ENCODE measurements at regions of chr12 and their contacts with region 1.

Region 1: GRCh38 chr12:29103539-29103974 is 45.5 kb upstream of the FAR2 start:
- DNase-seq: peak in 8 of 9 donors; percentile 41 to 82 (median 76)
- ATAC-seq: peak; percentile 95
- H3K4me3 ChIP-seq: peak overlapping the region; percentile 21
- H3K4me3 Mint-ChIP-seq: peak overlapping the region; percentile 71 to 91 (median 78)
- H3K27ac ChIP-seq: peak overlapping the region; percentile 74
- H3K27ac Mint-ChIP-seq: peak overlapping the region; percentile 91 to 99 (median 97)
- H3K4me1 ChIP-seq: peaks cover 23 to 33% of the 10 kb centered on the region in 2 donors
- H3K4me1 Mint-ChIP-seq: peaks cover 30 to 54% (median 46%) of the 10 kb centered on the region in 7 donors
- H3K27me3 ChIP-seq: no peaks in the 10 kb centered on the region
- H3K27me3 Mint-ChIP-seq: peaks cover 0 to 23% (median 0%) of the 10 kb centered on the region in 5 donors

Region 2: DNA sequence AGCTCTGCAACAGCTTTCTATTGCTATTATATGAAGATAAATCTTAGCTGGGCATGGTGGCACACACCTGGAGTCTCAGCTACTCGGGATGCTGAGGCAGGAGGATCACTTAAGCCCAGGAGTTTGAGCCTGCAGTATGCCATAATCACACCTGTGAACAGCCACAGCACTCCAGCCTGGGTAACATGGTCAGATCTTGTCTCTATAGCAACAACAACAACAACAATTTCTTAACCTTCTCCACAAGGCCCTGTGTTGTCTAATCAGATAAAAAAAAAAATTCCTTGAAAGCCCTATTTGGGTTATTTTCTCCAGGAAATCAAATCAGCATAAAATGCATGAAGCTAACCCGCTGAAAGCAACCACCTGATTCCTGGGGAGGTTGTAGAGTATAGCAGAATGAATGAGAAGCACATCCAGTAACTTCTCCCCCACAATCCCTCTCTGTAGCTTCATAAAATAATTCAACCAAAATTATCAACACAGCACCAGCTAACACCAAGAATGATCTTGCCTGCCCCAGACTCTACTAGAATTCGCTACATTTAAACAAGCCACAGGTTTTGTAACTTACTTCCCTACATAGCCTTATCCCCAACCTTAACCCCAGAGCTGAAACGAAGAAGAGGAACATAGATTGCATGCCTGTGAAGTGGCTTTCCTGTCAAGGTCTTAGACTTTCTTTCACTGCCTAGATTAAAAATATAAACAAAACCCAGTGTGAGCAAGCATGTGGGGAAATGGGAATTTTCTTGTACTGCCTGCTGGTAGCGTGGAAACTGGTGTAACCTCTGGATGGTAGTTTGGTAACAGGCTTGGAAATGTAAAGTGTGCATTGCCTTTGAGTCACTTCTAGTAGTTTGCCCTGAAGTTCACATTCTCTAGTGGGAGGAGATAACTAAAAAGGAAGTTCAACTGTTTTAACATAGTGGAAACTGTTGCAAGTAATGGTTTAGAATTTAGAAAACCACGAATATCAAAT is 1865.5 kb before region 1 on chr12:
- CTCF ChIA-PET with region 1: no interaction called
- POLR2A ChIA-PET with region 1: no interaction called
- intact Hi-C with region 1: loop called in 1 of 2 experiments (anchors 10 kb)
- DNase-seq: peak in 7 of 9 donors; percentile 6 to 31 (median 25)
- ATAC-seq: peak; percentile 86
- H3K4me3 ChIP-seq: no peak overlapping the region
- H3K4me3 Mint-ChIP-seq: peak overlapping the region in 9 of 10 donors; percentile 39 to 73 (median 48)
- H3K27ac ChIP-seq: peak overlapping the region; percentile 42
- H3K27ac Mint-ChIP-seq: peak overlapping the region; percentile 60 to 93 (median 87)
- H3K4me1 ChIP-seq: peaks cover 0 to 14% of the 10 kb centered on the region in 2 donors
- H3K4me1 Mint-ChIP-seq: peaks cover 12 to 34% (median 32%) of the 10 kb centered on the region in 7 donors
- H3K27me3 ChIP-seq: no peaks in the 10 kb centered on the region
- H3K27me3 Mint-ChIP-seq: peaks cover 0 to 5% (median 0%) of the 10 kb centered on the region in 5 donors

Region 3: GRCh38 chr12:27710592-27711316 is 1392.8 kb before region 1 on chr12 and contains the start of gene MRPS35:
- CTCF ChIA-PET with region 1: no interaction called
- POLR2A ChIA-PET with region 1: no interaction called
- intact Hi-C with region 1: loop called in 1 of 2 experiments (anchors 5 kb)
- DNase-seq: peak; percentile 86 to 94 (median 92)
- ATAC-seq: peak; percentile 100
- H3K4me3 ChIP-seq: peak within 1 kb of the TSS; percentile 98
- H3K4me3 Mint-ChIP-seq: peak within 1 kb of the TSS; percentile 94 to 100 (median 98)
- H3K27ac ChIP-seq: peak within 1 kb of the TSS; percentile 85
- H3K27ac Mint-ChIP-seq: peak within 1 kb of the TSS; percentile 91 to 100 (median 98)
- H3K4me1 ChIP-seq: peaks cover 7 to 13% of the 10 kb centered on the region in 2 donors
- H3K4me1 Mint-ChIP-seq: peaks cover 21 to 46% (median 39%) of the 10 kb centered on the region in 7 donors
- H3K27me3 ChIP-seq: no peaks in the 10 kb centered on the region
- H3K27me3 Mint-ChIP-seq: peaks cover 0 to 18% (median 0%) of the 10 kb centered on the region in 5 donors
- total RNA-seq, gene MRPS35: 19.9 to 35.7 (median 23.5) TPM

Region 4: DNA sequence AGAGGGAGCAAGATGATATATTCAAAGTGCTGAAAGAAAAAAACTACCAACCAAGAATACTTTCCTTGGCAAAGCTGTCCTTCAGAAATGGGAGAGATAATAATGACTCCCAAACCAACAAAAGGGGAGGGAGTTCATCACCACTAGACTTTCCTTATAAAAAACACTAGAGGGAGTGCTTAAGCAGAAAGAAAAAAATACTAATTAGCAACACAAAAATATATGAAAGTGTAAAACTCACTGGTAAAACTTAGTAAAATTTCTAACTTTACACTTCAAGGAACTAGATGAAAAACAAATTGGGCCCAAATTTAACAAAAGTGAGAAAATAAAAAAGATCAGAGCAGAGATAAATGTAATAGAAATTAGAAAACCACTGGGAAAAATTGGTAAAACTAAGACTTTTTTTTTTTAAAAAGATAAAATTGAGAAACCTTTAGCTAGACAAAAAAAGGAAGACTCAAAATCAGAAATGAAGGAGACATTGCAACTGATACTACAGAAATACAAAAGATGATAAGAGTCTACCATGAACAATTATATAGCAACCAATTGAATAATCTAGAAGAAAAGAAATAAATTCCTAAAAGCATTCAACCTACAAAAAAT is 14.8 kb before region 1 on chr12:
- CTCF ChIA-PET with region 1: interaction called, 3 read pairs
- POLR2A ChIA-PET with region 1: interaction called, 6 read pairs
- intact Hi-C with region 1: loop called (anchors 1 kb)
- DNase-seq: peak in 4 of 9 donors; percentile 26 to 36 (median 29)
- ATAC-seq: peak; percentile 49
- H3K4me3 ChIP-seq: no peak overlapping the region
- H3K4me3 Mint-ChIP-seq: no peak overlapping the region
- H3K27ac ChIP-seq: no peak overlapping the region
- H3K27ac Mint-ChIP-seq: no peak overlapping the region
- H3K4me1 ChIP-seq: no peaks in the 10 kb centered on the region
- H3K4me1 Mint-ChIP-seq: peaks cover 0 to 5% (median 3%) of the 10 kb centered on the region in 7 donors
- H3K27me3 ChIP-seq: no peaks in the 10 kb centered on the region
- H3K27me3 Mint-ChIP-seq: peaks cover 0 to 45% (median 0%) of the 10 kb centered on the region in 5 donors

Region 5: DNA sequence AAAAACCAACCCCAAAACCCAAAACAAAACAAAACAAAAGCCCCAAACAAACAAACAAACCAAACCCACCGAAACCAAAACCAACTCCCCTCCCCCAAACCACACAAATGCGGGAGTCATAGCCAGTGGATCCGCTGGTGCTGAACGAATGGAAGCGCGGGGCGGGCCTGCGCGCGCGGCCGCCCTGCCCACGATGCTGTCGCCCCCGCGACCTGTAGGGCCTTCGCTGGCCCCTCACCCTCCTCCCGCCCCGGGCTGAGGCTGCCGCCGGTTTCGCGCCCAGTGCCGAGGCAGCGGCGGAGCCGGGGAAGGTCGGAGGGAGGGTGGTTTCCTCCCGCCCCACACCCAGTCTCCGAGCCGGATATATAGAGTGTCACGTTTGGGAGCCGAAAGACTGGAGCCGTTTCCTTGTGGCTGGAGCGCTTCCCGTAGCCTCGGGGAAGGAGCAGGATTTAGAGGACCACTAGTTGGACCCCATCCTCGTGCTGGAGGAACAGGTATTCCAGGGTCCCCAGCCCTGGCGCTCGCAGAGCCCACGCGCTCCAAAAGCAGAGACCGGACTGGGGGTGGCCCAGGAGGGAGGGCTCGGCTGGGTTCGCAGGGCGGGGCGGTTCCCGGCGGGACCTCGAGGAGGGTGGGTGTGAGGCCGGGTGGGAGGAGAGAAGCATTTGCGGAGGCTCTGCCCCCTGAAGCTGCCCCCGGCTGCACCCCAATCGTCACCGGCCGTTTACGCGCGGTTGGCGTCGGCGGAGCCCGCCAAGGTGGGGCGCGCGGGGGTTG is 45.5 kb after region 1 on chr12 and contains the start of gene FAR2:
- CTCF ChIA-PET with region 1: no interaction called
- POLR2A ChIA-PET with region 1: interaction called, 4 read pairs
- intact Hi-C with region 1: loop called (anchors 1 kb)
- DNase-seq: peak; percentile 20 to 58 (median 33)
- ATAC-seq: peak; percentile 78
- H3K4me3 ChIP-seq: peak within 1 kb of the TSS; percentile 88
- H3K4me3 Mint-ChIP-seq: peak within 1 kb of the TSS; percentile 87 to 96 (median 92)
- H3K27ac ChIP-seq: peak within 1 kb of the TSS; percentile 37
- H3K27ac Mint-ChIP-seq: peak within 1 kb of the TSS; percentile 36 to 94 (median 74)
- H3K4me1 ChIP-seq: peaks cover 0 to 6% of the 10 kb centered on the region in 2 donors
- H3K4me1 Mint-ChIP-seq: peaks cover 14 to 31% (median 27%) of the 10 kb centered on the region in 7 donors
- H3K27me3 ChIP-seq: no peaks in the 10 kb centered on the region
- H3K27me3 Mint-ChIP-seq: peaks cover 0 to 64% (median 10%) of the 10 kb centered on the region in 5 donors
- total RNA-seq, gene FAR2: 1.1 to 11.1 (median 3.0) TPM

Region 6: DNA sequence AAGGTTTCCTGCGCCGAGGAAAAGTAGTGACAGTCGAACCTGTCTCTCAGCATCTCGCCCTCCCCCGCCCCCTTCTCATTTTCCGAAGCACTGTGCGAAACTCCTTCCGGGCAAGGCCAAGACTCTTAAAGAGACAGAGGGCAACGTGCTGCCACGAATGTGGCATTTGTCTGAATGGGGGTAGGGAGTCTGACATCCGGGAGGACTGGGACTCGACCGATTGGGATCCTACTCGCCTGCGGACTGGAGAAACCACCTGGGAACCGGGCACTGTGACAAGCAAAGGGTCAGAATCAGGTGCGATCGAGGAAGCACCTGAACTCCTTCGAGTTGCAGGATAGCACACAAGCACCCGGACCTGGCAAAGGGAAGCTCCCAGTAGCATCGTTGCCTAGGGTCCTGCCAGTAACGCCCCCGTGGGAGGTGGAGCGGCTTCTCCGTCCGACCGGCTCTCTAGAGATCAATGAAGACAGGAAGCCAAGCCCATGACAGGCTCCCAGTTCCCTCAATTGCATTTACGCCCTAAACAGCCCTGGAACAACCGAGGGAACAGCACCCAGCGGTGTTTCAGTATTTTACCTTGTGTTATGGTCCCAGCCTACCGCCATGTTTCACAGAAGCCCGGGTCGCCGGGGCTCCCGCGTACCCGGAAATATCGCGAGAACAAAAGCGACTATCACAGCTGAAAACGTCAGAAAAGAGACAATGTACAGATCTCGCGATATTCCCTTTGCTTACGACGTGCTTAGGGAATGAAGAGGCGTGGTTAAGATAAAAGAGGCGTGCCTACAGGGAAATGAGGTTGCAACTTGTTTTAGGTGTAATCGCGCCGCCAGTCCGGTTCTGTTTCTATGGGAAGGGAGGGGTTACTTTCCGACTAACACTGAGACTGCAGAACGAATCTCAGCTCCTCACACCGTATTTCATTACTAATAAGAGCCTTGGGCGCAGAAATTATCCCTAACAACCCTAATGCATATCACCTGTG is 277.3 kb after region 1 on chr12 and contains the start of gene ERGIC2:
- CTCF ChIA-PET with region 1: interaction called, 3 read pairs
- POLR2A ChIA-PET with region 1: interaction called, 11 read pairs
- intact Hi-C with region 1: loop called (anchors 1 kb)
- DNase-seq: peak; percentile 63 to 97 (median 95)
- ATAC-seq: peak; percentile 97
- H3K4me3 ChIP-seq: peak within 1 kb of the TSS; percentile 98
- H3K4me3 Mint-ChIP-seq: peak within 1 kb of the TSS; percentile 88 to 97 (median 94)
- H3K27ac ChIP-seq: peak within 1 kb of the TSS; percentile 91
- H3K27ac Mint-ChIP-seq: peak within 1 kb of the TSS; percentile 92 to 98 (median 96)
- H3K4me1 ChIP-seq: peaks cover 9 to 12% of the 10 kb centered on the region in 2 donors
- H3K4me1 Mint-ChIP-seq: peaks cover 20 to 63% (median 46%) of the 10 kb centered on the region in 7 donors
- H3K27me3 ChIP-seq: no peaks in the 10 kb centered on the region
- H3K27me3 Mint-ChIP-seq: no peaks in the 10 kb centered on the region
- total RNA-seq, gene ERGIC2: 36.0 to 85.7 (median 78.6) TPM

Region 7: GRCh38 chr12:30695199-30696103 is 1591.9 kb after region 1 on chr12 and contains the start of gene IPO8:
- CTCF ChIA-PET with region 1: no interaction called
- POLR2A ChIA-PET with region 1: no interaction called
- intact Hi-C with region 1: loop called in 1 of 2 experiments (anchors 5 kb)
- DNase-seq: peak; percentile 61 to 83 (median 76)
- ATAC-seq: peak; percentile 97
- H3K4me3 ChIP-seq: peak within 1 kb of the TSS; percentile 94
- H3K4me3 Mint-ChIP-seq: peak within 1 kb of the TSS; percentile 93 to 100 (median 96)
- H3K27ac ChIP-seq: peak within 1 kb of the TSS; percentile 78
- H3K27ac Mint-ChIP-seq: peak within 1 kb of the TSS; percentile 91 to 98 (median 94)
- H3K4me1 ChIP-seq: peaks cover 22 to 28% of the 10 kb centered on the region in 2 donors
- H3K4me1 Mint-ChIP-seq: peaks cover 27 to 52% (median 45%) of the 10 kb centered on the region in 7 donors
- H3K27me3 ChIP-seq: no peaks in the 10 kb centered on the region
- H3K27me3 Mint-ChIP-seq: peaks cover 0 to 6% (median 4%) of the 10 kb centered on the region in 5 donors
- total RNA-seq, gene IPO8: 30.4 to 59.2 (median 44.4) TPM

Measured in naive thymus-derived CD4-positive, alpha-beta T cell (primary cell).